Naive thymus-derived CD4-positive, alpha-beta T cell (primary cell): ENCODE measurements at regions of chr7 and their contacts with region 1.

Region 1: DNA sequence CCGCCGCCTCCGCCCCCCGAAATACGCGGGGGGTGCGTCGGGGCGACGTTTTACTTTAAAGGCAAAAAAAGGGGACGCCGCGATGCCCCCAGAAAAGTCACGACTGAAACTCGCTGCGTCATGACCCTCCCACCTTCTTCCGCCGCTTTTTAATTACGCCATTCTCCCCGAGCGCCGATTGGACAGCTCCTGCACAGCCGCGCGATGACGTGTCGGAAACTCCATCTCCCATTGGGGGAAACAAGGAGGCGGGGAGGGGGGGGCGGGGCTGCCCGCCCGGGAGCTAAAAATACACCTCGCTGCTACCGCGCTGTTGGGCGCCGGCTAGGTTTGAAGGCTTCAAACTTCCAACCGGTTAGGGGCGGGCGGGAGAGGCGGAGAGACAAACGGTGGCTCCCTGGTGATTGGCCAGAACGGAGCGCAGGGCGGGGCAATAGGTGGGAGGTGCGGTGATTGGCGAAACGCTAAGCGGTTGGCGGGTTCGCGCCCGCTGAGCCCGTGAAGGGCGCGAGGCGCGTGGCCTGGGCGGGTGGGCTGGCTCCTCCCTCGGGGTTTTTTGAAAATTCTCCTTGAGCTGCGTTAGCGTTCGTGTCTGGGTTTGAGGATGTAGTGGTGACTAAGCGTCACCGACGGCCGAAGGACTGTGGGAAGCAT is at the start of gene RHEB:
- DNase-seq: peak; percentile 93 to 99 (median 98)
- ATAC-seq: peak; percentile 91
- H3K4me3 ChIP-seq: peak within 1 kb of the TSS; percentile 91
- H3K4me3 Mint-ChIP-seq: peak within 1 kb of the TSS; percentile 87 to 97 (median 94)
- H3K27ac ChIP-seq: peak within 1 kb of the TSS; percentile 88
- H3K27ac Mint-ChIP-seq: peak within 1 kb of the TSS; percentile 94 to 99 (median 98)
- H3K4me1 ChIP-seq: peaks cover 24 to 26% of the 10 kb centered on the region in 2 donors
- H3K4me1 Mint-ChIP-seq: peaks cover 32 to 44% (median 36%) of the 10 kb centered on the region in 7 donors
- H3K27me3 ChIP-seq: no peaks in the 10 kb centered on the region
- H3K27me3 Mint-ChIP-seq: peaks cover 0 to 12% (median 0%) of the 10 kb centered on the region in 5 donors
- total RNA-seq, gene RHEB: 31.2 to 62.6 (median 40.2) TPM

Region 2: GRCh38 chr7:150685219-150686029 is 834.5 kb before region 1 on chr7 and contains the start of gene GIMAP2:
- CTCF ChIA-PET with region 1: no interaction called
- POLR2A ChIA-PET with region 1: no interaction called
- intact Hi-C with region 1: no loop called
- DNase-seq: peak in 7 of 9 donors; percentile 40 to 73 (median 65)
- ATAC-seq: peak; percentile 90
- H3K4me3 ChIP-seq: peak within 1 kb of the TSS; percentile 97
- H3K4me3 Mint-ChIP-seq: peak within 1 kb of the TSS; percentile 88 to 100 (median 98)
- H3K27ac ChIP-seq: peak within 1 kb of the TSS; percentile 78
- H3K27ac Mint-ChIP-seq: peak within 1 kb of the TSS; percentile 91 to 100 (median 97)
- H3K4me1 ChIP-seq: peaks cover 49 to 53% of the 10 kb centered on the region in 2 donors
- H3K4me1 Mint-ChIP-seq: peaks cover 50 to 87% (median 81%) of the 10 kb centered on the region in 7 donors
- H3K27me3 ChIP-seq: no peaks in the 10 kb centered on the region
- H3K27me3 Mint-ChIP-seq: no peaks in the 10 kb centered on the region
- total RNA-seq, gene GIMAP2: 79.4 to 286 (median 122) TPM

Region 3: DNA sequence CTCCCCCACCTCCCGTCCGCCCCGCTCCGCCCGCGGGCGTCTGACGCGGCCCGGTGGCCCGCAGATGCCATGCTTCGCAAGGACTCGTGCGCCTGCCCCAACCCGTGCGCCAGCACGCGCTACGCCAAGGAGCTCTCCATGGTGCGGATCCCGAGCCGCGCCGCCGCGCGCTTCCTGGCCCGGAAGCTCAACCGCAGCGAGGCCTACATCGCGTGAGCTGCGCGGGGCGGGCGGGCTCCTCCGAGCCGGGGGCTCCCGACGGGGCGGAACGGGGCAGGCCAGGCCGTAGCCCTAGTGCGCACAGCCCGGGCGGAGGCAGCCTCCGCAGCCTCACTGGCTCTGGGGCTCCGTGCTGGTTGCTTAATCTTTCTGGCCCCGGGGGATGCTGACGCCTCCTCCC is 468.8 kb before region 1 on chr7:
- CTCF ChIA-PET with region 1: no interaction called
- POLR2A ChIA-PET with region 1: no interaction called
- intact Hi-C with region 1: no loop called
- DNase-seq: peak; percentile 55 to 75 (median 69)
- ATAC-seq: peak; percentile 88
- H3K4me3 ChIP-seq: no peak overlapping the region
- H3K4me3 Mint-ChIP-seq: no peak overlapping the region
- H3K27ac ChIP-seq: no peak overlapping the region
- H3K27ac Mint-ChIP-seq: no peak overlapping the region
- H3K4me1 ChIP-seq: peaks cover 0 to 6% of the 10 kb centered on the region in 2 donors
- H3K4me1 Mint-ChIP-seq: peaks cover 6 to 19% (median 14%) of the 10 kb centered on the region in 7 donors
- H3K27me3 ChIP-seq: no peaks in the 10 kb centered on the region
- H3K27me3 Mint-ChIP-seq: peaks cover 0 to 10% (median 0%) of the 10 kb centered on the region in 5 donors

Region 4: DNA sequence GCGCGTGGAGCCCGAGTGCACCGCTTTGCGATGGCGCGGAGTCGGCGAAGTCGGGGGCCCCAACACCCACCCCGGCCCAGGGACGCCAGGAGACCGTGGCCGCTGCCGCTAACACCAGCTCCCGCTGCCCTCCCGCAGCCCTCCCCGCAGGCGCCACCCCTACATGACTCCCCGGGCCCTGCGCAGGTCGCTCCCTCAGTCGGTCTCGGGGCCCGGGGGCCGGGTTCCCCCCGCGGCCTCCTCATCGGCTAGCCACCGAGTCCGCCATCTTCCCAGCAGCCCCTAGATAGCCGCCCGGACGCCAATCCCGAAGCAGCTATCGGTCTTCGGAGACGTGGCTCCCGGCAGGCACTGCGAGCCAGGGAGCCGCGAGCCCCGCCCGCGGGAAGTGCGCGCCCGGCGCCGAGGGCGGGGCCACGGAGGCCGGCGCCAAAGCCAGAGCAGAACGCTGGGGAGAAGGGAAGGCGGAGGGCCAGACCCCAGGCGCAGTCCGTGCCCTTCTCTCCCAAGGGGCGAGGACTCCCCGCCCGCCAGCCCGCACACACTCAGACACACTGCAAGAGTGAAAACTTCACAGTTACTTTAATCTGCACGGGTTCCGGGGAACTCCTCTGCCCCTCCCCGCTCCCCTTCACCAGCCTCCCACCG is 439.2 kb before region 1 on chr7 and contains the start of gene FASTK:
- CTCF ChIA-PET with region 1: no interaction called
- POLR2A ChIA-PET with region 1: no interaction called
- intact Hi-C with region 1: loop called (anchors 5 to 10 kb)
- DNase-seq: peak; percentile 79 to 89 (median 87)
- ATAC-seq: peak; percentile 85
- H3K4me3 ChIP-seq: peak within 1 kb of the TSS; percentile 86
- H3K4me3 Mint-ChIP-seq: peak within 1 kb of the TSS; percentile 87 to 97 (median 88)
- H3K27ac ChIP-seq: peak within 1 kb of the TSS; percentile 93
- H3K27ac Mint-ChIP-seq: peak within 1 kb of the TSS; percentile 72 to 92 (median 88)
- H3K4me1 ChIP-seq: peaks cover 41 to 44% of the 10 kb centered on the region in 2 donors
- H3K4me1 Mint-ChIP-seq: peaks cover 21 to 52% (median 39%) of the 10 kb centered on the region in 7 donors
- H3K27me3 ChIP-seq: no peaks in the 10 kb centered on the region
- H3K27me3 Mint-ChIP-seq: peaks cover 0 to 12% (median 0%) of the 10 kb centered on the region in 5 donors
- total RNA-seq, gene FASTK: 94.1 to 136 (median 101) TPM

Region 5: GRCh38 chr7:151408839-151409666 is 110.8 kb before region 1 on chr7:
- CTCF ChIA-PET with region 1: no interaction called
- POLR2A ChIA-PET with region 1: no interaction called
- intact Hi-C with region 1: loop called in 1 of 2 experiments (anchors 1 kb)
- DNase-seq: peak in 8 of 9 donors; percentile 23 to 71 (median 64)
- ATAC-seq: peak; percentile 88
- H3K4me3 ChIP-seq: peak overlapping the region; percentile 51
- H3K4me3 Mint-ChIP-seq: peak overlapping the region; percentile 67 to 88 (median 78)
- H3K27ac ChIP-seq: no peak overlapping the region
- H3K27ac Mint-ChIP-seq: peak overlapping the region in 6 of 9 donors; percentile 8 to 81 (median 52)
- H3K4me1 ChIP-seq: peaks cover 11 to 24% of the 10 kb centered on the region in 2 donors
- H3K4me1 Mint-ChIP-seq: peaks cover 11 to 24% (median 15%) of the 10 kb centered on the region in 7 donors
- H3K27me3 ChIP-seq: peaks cover 0 to 8% of the 10 kb centered on the region in 2 donors
- H3K27me3 Mint-ChIP-seq: peaks cover 19 to 63% (median 27%) of the 10 kb centered on the region in 5 donors

Region 6: GRCh38 chr7:151508991-151509390 is 10.9 kb before region 1 on chr7:
- CTCF ChIA-PET with region 1: no interaction called
- POLR2A ChIA-PET with region 1: interaction called, 3 read pairs
- intact Hi-C with region 1: loop called in 1 of 2 experiments (anchors 1 kb)
- DNase-seq: no peak
- ATAC-seq: no peak
- H3K4me3 ChIP-seq: no peak overlapping the region
- H3K4me3 Mint-ChIP-seq: peak overlapping the region in 1 of 10 donors; percentile 36
- H3K27ac ChIP-seq: no peak overlapping the region
- H3K27ac Mint-ChIP-seq: no peak overlapping the region
- H3K4me1 ChIP-seq: peaks cover 0 to 5% of the 10 kb centered on the region in 2 donors
- H3K4me1 Mint-ChIP-seq: peaks cover 42 to 86% (median 82%) of the 10 kb centered on the region in 7 donors
- H3K27me3 ChIP-seq: no peaks in the 10 kb centered on the region
- H3K27me3 Mint-ChIP-seq: no peaks in the 10 kb centered on the region

Region 7: DNA sequence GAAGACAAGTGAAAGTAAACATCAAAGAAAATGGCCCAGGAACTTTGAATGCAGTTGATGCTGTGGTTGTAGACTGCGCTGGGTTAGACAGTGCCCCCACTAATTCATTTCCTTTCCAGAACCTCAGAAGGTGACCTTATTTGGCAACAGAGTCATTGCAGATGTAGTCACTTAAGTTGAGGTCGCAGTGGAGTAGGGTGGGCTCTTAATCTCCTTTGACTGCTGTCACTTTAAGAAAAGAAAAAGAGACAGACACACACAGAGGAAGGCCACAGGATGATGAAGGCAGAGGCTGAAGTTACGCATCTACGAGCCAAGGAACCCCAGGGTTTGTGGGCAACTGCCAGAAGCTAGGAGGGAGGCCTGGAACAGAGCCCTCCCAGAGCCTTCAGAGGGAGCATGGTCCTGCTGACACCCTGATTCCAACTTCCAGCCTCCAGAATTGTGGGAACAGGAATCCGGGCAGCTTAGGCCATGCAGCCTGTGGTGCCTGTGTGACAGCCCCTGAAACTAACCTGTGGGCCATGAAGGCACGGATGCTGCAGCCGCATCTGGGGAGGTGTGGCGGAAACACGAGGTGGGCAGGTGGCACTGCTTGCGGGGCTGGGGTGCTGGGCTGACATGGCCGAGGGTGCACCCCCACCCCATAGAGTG is 249.4 kb after region 1 on chr7:
- CTCF ChIA-PET with region 1: no interaction called
- POLR2A ChIA-PET with region 1: interaction called, 3 read pairs
- intact Hi-C with region 1: loop called in 1 of 2 experiments (anchors 1 kb)
- DNase-seq: peak in 7 of 9 donors; percentile 63 to 82 (median 74)
- ATAC-seq: peak; percentile 90
- H3K4me3 ChIP-seq: peak overlapping the region; percentile 52
- H3K4me3 Mint-ChIP-seq: peak overlapping the region; percentile 74 to 88 (median 81)
- H3K27ac ChIP-seq: peak overlapping the region; percentile 81
- H3K27ac Mint-ChIP-seq: peak overlapping the region; percentile 88 to 96 (median 93)
- H3K4me1 ChIP-seq: peaks cover 33 to 43% of the 10 kb centered on the region in 2 donors
- H3K4me1 Mint-ChIP-seq: peaks cover 37 to 86% (median 80%) of the 10 kb centered on the region in 7 donors
- H3K27me3 ChIP-seq: no peaks in the 10 kb centered on the region
- H3K27me3 Mint-ChIP-seq: no peaks in the 10 kb centered on the region

Region 8: GRCh38 chr7:151808400-151809183 is 288.7 kb after region 1 on chr7:
- CTCF ChIA-PET with region 1: no interaction called
- POLR2A ChIA-PET with region 1: no interaction called
- intact Hi-C with region 1: no loop called
- DNase-seq: no peak
- ATAC-seq: peak; percentile 54
- H3K4me3 ChIP-seq: no peak overlapping the region
- H3K4me3 Mint-ChIP-seq: no peak overlapping the region
- H3K27ac ChIP-seq: no peak overlapping the region
- H3K27ac Mint-ChIP-seq: no peak overlapping the region
- H3K4me1 ChIP-seq: no peaks in the 10 kb centered on the region
- H3K4me1 Mint-ChIP-seq: peaks cover 0 to 19% (median 11%) of the 10 kb centered on the region in 7 donors
- H3K27me3 ChIP-seq: no peaks in the 10 kb centered on the region
- H3K27me3 Mint-ChIP-seq: no peaks in the 10 kb centered on the region

Region 9: GRCh38 chr7:152025077-152025936 is 505.4 kb after region 1 on chr7 and contains the start of gene GALNT11:
- CTCF ChIA-PET with region 1: no interaction called
- POLR2A ChIA-PET with region 1: no interaction called
- intact Hi-C with region 1: loop called in 1 of 2 experiments (anchors 1 kb)
- DNase-seq: peak; percentile 82 to 95 (median 91)
- ATAC-seq: peak; percentile 96
- H3K4me3 ChIP-seq: peak within 1 kb of the TSS; percentile 75
- H3K4me3 Mint-ChIP-seq: peak within 1 kb of the TSS; percentile 85 to 92 (median 88)
- H3K27ac ChIP-seq: peak within 1 kb of the TSS; percentile 88
- H3K27ac Mint-ChIP-seq: peak within 1 kb of the TSS; percentile 85 to 96 (median 95)
- H3K4me1 ChIP-seq: peaks cover 7 to 22% of the 10 kb centered on the region in 2 donors
- H3K4me1 Mint-ChIP-seq: peaks cover 12 to 45% (median 39%) of the 10 kb centered on the region in 7 donors
- H3K27me3 ChIP-seq: no peaks in the 10 kb centered on the region
- H3K27me3 Mint-ChIP-seq: peaks cover 0 to 11% (median 0%) of the 10 kb centered on the region in 5 donors
- total RNA-seq, gene GALNT11: 16.0 to 29.5 (median 17.9) TPM